Naive thymus-derived CD4-positive, alpha-beta T cell (primary cell): ENCODE measurements at regions of chr9 and their contacts with region 1.

Region 1: GRCh38 chr9:35603987-35604577 is 980 bp upstream of the TESK1 start:
- DNase-seq: peak; percentile 94 to 99 (median 99)
- ATAC-seq: peak; percentile 95
- H3K4me3 ChIP-seq: peak overlapping the region; percentile 65
- H3K4me3 Mint-ChIP-seq: peak overlapping the region; percentile 92 to 100 (median 98)
- H3K27ac ChIP-seq: peak overlapping the region; percentile 84
- H3K27ac Mint-ChIP-seq: peak overlapping the region; percentile 94 to 99 (median 98)
- H3K4me1 ChIP-seq: peaks cover 22 to 24% of the 10 kb centered on the region in 2 donors
- H3K4me1 Mint-ChIP-seq: peaks cover 21 to 42% (median 35%) of the 10 kb centered on the region in 7 donors
- H3K27me3 ChIP-seq: no peaks in the 10 kb centered on the region
- H3K27me3 Mint-ChIP-seq: no peaks in the 10 kb centered on the region

Region 2: GRCh38 chr9:34328987-34329832 is 1274.9 kb before region 1 on chr9 and contains the starts of genes KIF24 and NUDT2:
- CTCF ChIA-PET with region 1: no interaction called
- POLR2A ChIA-PET with region 1: no interaction called
- intact Hi-C with region 1: loop called in 1 of 2 experiments (anchors 5 kb)
- DNase-seq: peak; percentile 89 to 99 (median 96)
- ATAC-seq: peak; percentile 95
- H3K4me3 ChIP-seq: peak within 1 kb of the TSS; percentile 98
- H3K4me3 Mint-ChIP-seq: peak within 1 kb of the TSS; percentile 88 to 97 (median 94)
- H3K27ac ChIP-seq: peak within 1 kb of the TSS; percentile 94
- H3K27ac Mint-ChIP-seq: peak within 1 kb of the TSS; percentile 77 to 98 (median 95)
- H3K4me1 ChIP-seq: peaks cover 3 to 8% of the 10 kb centered on the region in 2 donors
- H3K4me1 Mint-ChIP-seq: peaks cover 11 to 45% (median 29%) of the 10 kb centered on the region in 7 donors
- H3K27me3 ChIP-seq: no peaks in the 10 kb centered on the region
- H3K27me3 Mint-ChIP-seq: no peaks in the 10 kb centered on the region
- total RNA-seq, gene KIF24: 0.11 to 6.0 (median 0.35) TPM
- total RNA-seq, gene NUDT2: 7.5 to 30.0 (median 22.7) TPM

Region 3: DNA sequence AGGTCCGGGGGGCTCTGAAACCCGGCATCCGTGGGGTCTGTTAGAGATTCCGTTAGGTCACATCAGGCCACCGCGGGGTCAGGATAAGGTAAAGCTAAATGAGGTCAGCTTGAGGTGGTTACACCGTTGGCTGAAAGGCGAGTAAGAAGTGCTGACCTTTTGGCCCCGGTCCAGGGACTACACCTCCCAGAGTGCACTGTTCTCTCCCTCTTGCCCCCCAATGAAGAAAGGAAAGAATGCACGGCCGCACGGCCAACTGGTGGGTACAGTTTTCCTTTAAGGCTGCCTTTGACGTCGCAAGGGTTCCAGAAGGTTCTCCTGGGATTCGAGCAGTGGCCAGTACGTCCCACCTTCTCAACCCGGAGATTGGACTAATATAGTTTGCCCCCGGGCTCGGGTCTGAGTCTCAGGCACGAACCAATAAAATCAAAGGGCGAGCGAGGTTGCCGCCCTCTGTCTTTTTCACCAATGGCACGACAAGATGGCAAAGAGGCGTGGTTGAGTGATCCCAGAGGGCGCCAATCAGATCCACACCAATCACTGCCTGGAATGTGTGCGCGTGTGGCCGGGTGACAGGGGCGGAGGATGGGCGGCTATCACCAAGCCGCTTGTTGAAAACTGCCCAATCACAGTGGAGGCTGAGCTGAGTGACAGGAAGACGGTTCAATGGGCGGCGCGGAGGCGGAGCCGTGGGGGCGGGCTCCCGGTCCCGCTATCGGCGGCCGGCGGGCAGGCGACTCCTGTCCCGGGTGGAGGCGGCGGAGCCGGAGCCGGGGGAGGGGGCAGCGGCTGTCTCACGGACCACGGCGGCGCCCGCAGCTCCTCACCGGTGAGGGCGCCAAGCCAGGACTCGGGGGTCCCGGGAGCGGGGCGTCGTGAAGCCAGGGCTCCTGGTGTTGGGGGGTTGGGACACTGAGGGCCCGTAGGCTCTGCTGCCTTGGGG is 614.8 kb before region 1 on chr9 and contains the start of gene DNAJB5:
- CTCF ChIA-PET with region 1: no interaction called
- POLR2A ChIA-PET with region 1: no interaction called
- intact Hi-C with region 1: loop called (anchors 1 to 2 kb)
- DNase-seq: peak; percentile 96 to 98 (median 97)
- ATAC-seq: peak; percentile 96
- H3K4me3 ChIP-seq: peak within 1 kb of the TSS; percentile 77
- H3K4me3 Mint-ChIP-seq: peak within 1 kb of the TSS; percentile 85 to 100 (median 96)
- H3K27ac ChIP-seq: peak within 1 kb of the TSS; percentile 77
- H3K27ac Mint-ChIP-seq: peak within 1 kb of the TSS; percentile 64 to 94 (median 89)
- H3K4me1 ChIP-seq: peaks cover 19 to 37% of the 10 kb centered on the region in 2 donors
- H3K4me1 Mint-ChIP-seq: peaks cover 35 to 62% (median 49%) of the 10 kb centered on the region in 7 donors
- H3K27me3 ChIP-seq: no peaks in the 10 kb centered on the region
- H3K27me3 Mint-ChIP-seq: no peaks in the 10 kb centered on the region
- total RNA-seq, gene DNAJB5: 1.1 to 3.7 (median 1.4) TPM

Region 4: GRCh38 chr9:35616681-35617459 is 12.8 kb after region 1 on chr9:
- CTCF ChIA-PET with region 1: interaction called, 5 read pairs
- POLR2A ChIA-PET with region 1: interaction called, 10 read pairs
- intact Hi-C with region 1: loop called (anchors 1 kb)
- DNase-seq: peak; percentile 46 to 71 (median 64)
- ATAC-seq: peak; percentile 80
- H3K4me3 ChIP-seq: peak overlapping the region; percentile 84
- H3K4me3 Mint-ChIP-seq: peak overlapping the region; percentile 82 to 89 (median 86)
- H3K27ac ChIP-seq: peak overlapping the region; percentile 71
- H3K27ac Mint-ChIP-seq: peak overlapping the region; percentile 84 to 93 (median 91)
- H3K4me1 ChIP-seq: peaks cover 27 to 36% of the 10 kb centered on the region in 2 donors
- H3K4me1 Mint-ChIP-seq: peaks cover 33 to 44% (median 38%) of the 10 kb centered on the region in 7 donors
- H3K27me3 ChIP-seq: no peaks in the 10 kb centered on the region
- H3K27me3 Mint-ChIP-seq: no peaks in the 10 kb centered on the region

Region 5: DNA sequence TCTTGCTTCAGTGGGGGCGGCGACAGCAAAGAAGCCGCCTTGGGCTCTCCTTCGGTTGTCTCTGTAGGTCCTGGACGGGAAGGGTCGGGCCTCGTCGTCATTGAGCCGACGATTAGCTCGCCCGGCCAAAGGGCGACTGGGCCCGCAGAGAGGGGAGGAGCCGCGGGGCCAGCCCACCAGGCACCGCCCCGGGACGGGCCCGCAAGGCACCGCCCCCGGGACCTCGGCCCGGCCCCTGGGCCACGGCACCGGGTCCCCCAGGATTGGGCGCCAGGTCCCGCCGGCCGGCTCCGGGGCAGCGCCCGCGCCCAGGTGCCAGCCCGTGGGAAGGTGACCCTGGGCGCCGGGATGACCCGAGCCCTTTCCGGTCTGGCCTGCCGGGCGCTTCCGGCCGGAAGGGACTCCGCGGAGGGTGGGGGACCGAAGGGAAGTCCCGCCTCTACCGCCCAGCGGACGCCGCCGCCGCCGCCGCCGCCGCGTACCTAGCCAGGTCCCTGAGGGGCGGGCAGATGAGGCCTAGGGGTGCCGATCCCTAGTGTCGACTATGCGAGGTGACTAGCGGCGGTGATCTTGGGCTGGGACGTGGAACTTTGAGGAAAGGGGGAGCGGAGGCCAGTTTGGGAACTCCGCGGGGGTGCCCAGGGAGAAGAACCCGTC is 144.9 kb after region 1 on chr9 and contains the starts of genes GBA2 and RGP1:
- CTCF ChIA-PET with region 1: interaction called, 4 read pairs
- POLR2A ChIA-PET with region 1: interaction called, 5 read pairs
- intact Hi-C with region 1: loop called (anchors 1 kb)
- DNase-seq: peak; percentile 36 to 82 (median 51)
- ATAC-seq: peak; percentile 84
- H3K4me3 ChIP-seq: peak within 1 kb of the TSS; percentile 84
- H3K4me3 Mint-ChIP-seq: peak within 1 kb of the TSS; percentile 89 to 98 (median 96)
- H3K27ac ChIP-seq: peak within 1 kb of the TSS; percentile 87
- H3K27ac Mint-ChIP-seq: peak within 1 kb of the TSS; percentile 89 to 97 (median 96)
- H3K4me1 ChIP-seq: peaks cover 32 to 33% of the 10 kb centered on the region in 2 donors
- H3K4me1 Mint-ChIP-seq: peaks cover 36 to 66% (median 49%) of the 10 kb centered on the region in 7 donors
- H3K27me3 ChIP-seq: no peaks in the 10 kb centered on the region
- H3K27me3 Mint-ChIP-seq: no peaks in the 10 kb centered on the region
- total RNA-seq, gene GBA2: 22.7 to 55.4 (median 49.9) TPM
- total RNA-seq, gene RGP1: 21.2 to 28.8 (median 23.3) TPM

Region 6: GRCh38 chr9:35882263-35882848 is 278.3 kb after region 1 on chr9:
- CTCF ChIA-PET with region 1: interaction called, 4 read pairs
- POLR2A ChIA-PET with region 1: no interaction called
- intact Hi-C with region 1: loop called (anchors 1 to 5 kb)
- DNase-seq: peak; percentile 54 to 83 (median 71)
- ATAC-seq: peak; percentile 72
- H3K4me3 ChIP-seq: no peak overlapping the region
- H3K4me3 Mint-ChIP-seq: peak overlapping the region in 1 of 10 donors; percentile 18
- H3K27ac ChIP-seq: no peak overlapping the region
- H3K27ac Mint-ChIP-seq: no peak overlapping the region
- H3K4me1 ChIP-seq: no peaks in the 10 kb centered on the region
- H3K4me1 Mint-ChIP-seq: peaks cover 0 to 2% (median 0%) of the 10 kb centered on the region in 7 donors
- H3K27me3 ChIP-seq: no peaks in the 10 kb centered on the region
- H3K27me3 Mint-ChIP-seq: peaks cover 0 to 45% (median 8%) of the 10 kb centered on the region in 5 donors